ENCODE measurements at regions of chr1 and their contacts with region 1.

Region 1: GRCh38 chr1:2240270-2241156 is 12.4 kb downstream of the SKI start:
- DNase-seq: peak; percentile 89
- H3K4me3 ChIP-seq: no peak overlapping the region
- H3K27ac ChIP-seq: peak overlapping the region; percentile 7 to 21
- H3K4me1 ChIP-seq: peaks cover 55% of the 10 kb centered on the region
- H3K27me3 ChIP-seq: no peaks in the 10 kb centered on the region
- CTCF ChIP-seq: no peak
- POLR2A ChIP-seq: no peak

Region 2: DNA sequence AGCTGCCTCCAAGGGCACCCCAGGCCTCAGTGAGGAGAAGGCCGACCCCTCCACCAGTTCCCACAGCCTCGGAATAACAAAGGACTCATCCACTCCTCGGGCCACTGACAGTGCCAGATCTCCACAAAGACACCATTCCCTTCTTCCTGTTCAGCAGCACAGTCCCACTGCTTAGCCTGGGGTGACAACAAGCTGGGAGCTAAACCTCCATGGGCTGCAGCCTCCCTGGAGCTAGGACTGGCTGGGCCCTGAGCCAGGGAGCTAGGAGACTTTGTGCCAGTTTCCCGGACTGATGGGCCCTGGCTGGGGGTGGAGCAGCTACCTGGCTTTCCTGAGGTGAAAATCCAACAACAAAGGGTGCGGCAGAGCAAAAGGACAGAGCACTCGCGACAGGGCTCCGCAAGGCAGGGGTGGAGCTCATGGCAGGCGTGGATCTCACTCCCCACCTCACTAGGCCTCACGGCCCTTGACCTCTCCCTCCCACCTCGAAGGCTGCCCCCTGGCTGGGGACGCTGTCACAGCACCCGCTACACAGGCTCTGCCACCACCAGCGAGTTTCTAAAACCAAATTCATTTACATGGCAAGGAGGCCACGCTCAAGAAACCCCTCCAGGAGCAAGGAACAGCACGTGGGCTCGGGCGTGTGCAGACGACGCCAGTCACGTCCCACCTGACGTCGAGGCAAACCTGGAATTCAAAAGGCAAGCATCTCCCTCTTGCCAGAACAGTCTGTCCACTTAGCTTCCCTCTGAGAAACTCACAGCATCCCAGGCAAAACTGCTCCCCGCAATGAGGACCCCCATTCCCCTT is 561.7 kb before region 1 on chr1:
- intact Hi-C with region 1: loop called (anchors 10 kb)
- DNase-seq: no peak
- H3K4me3 ChIP-seq: no peak overlapping the region
- H3K27ac ChIP-seq: no peak overlapping the region
- H3K4me1 ChIP-seq: peaks cover 13% of the 10 kb centered on the region
- H3K27me3 ChIP-seq: no peaks in the 10 kb centered on the region
- CTCF ChIP-seq: no peak
- POLR2A ChIP-seq: no peak